Activated CD4-positive, alpha-beta T cell treated with anti-CD3 and anti-CD28 coated beads, Interleukin-2, amount 10 ng/mL, durations not matched to agents 7 days and 5 days (primary cell): ENCODE measurements at regions of chr5 and their contacts with region 1.

Region 1: GRCh38 chr5:176901260-176902101 is 2.3 kb upstream of the HK3 start:
- DNase-seq: no peak
- H3K4me3 Mint-ChIP-seq: no peak overlapping the region
- H3K27ac Mint-ChIP-seq: no peak overlapping the region
- H3K4me1 Mint-ChIP-seq: peaks cover 17% of the 10 kb centered on the region
- H3K27me3 Mint-ChIP-seq: no peaks in the 10 kb centered on the region

Region 2: GRCh38 chr5:176762489-176762888 is 139.0 kb before region 1 on chr5:
- CTCF ChIA-PET with region 1: no interaction called
- POLR2A ChIA-PET with region 1: no interaction called
- DNase-seq: no peak
- H3K4me3 Mint-ChIP-seq: no peak overlapping the region
- H3K27ac Mint-ChIP-seq: no peak overlapping the region
- H3K4me1 Mint-ChIP-seq: no peaks in the 10 kb centered on the region
- H3K27me3 Mint-ChIP-seq: peaks cover 30% of the 10 kb centered on the region

Region 3: DNA sequence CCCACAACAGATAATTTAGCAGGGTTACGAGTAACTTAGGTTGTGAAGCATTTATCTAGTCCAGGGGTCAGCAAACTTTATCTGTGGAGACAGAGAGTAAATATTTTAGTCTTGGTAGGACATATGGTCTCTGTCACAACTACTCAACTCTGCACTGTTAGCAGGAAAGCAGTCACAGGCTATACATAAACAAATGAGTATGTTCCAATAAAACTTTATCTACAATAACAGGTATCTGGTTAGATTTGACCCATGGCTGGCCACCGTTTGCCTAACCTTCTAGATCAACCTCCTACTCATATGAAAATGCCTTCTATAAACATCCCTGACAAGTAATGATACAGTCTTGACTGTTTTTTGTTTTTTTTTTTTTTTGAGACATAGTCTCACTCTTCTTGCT is 10.6 kb after region 1 on chr5:
- CTCF ChIA-PET with region 1: interaction called, 10 read pairs
- POLR2A ChIA-PET with region 1: no interaction called
- DNase-seq: no peak
- H3K4me3 Mint-ChIP-seq: no peak overlapping the region
- H3K27ac Mint-ChIP-seq: no peak overlapping the region
- H3K4me1 Mint-ChIP-seq: peaks cover 10% of the 10 kb centered on the region
- H3K27me3 Mint-ChIP-seq: no peaks in the 10 kb centered on the region